ENCODE measurements at regions of chr19 and their contacts with region 1.

Region 1: DNA sequence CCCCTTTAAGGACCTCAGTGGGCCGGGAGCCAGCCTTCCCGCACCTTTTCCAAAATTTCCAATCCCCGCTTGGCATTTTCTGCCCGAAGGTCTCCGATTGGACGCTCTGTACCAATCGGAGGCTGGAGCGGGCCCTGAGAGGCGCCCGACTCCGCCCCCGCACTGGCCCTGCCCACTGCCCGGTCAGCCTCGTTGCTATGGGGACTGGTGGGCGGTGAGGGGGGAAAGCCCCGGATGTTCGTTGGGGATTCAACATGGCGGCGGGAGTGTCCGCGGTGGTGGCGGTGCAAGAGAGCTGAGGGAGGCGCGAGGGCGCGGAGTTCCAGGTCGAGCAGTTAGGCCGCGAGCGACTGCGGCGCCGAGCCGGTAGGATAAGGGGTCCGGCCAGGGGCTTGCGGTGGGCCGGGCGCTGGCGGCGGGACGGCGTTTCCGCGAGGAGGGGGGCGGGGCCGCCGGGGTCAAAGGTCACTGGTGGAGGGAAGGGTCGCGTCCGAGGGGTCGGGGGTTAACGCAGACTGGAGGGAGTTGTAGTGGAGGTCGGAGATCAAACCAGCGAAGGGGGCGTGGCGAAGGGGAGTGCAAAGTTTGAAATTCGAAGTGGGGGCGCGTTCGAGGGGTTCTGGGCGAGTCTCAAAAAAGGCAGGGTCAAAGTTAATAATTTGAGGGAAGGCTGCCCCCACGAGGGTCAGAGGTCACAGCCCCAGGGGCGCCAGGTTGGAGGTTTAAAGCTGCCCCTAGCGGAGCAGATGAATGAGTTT is at the start of gene PAK4:
- DNase-seq: peak; percentile 99
- ATAC-seq: peak; percentile 97
- H3K4me3 ChIP-seq: peak within 1 kb of the TSS; percentile 64
- H3K27ac ChIP-seq: peak within 1 kb of the TSS; percentile 63
- H3K4me1 ChIP-seq: peaks cover 22% of the 10 kb centered on the region
- H3K27me3 ChIP-seq: no peaks in the 10 kb centered on the region
- CTCF ChIP-seq: no peak
- total RNA-seq, gene PAK4: 72.8 TPM

Region 2: DNA sequence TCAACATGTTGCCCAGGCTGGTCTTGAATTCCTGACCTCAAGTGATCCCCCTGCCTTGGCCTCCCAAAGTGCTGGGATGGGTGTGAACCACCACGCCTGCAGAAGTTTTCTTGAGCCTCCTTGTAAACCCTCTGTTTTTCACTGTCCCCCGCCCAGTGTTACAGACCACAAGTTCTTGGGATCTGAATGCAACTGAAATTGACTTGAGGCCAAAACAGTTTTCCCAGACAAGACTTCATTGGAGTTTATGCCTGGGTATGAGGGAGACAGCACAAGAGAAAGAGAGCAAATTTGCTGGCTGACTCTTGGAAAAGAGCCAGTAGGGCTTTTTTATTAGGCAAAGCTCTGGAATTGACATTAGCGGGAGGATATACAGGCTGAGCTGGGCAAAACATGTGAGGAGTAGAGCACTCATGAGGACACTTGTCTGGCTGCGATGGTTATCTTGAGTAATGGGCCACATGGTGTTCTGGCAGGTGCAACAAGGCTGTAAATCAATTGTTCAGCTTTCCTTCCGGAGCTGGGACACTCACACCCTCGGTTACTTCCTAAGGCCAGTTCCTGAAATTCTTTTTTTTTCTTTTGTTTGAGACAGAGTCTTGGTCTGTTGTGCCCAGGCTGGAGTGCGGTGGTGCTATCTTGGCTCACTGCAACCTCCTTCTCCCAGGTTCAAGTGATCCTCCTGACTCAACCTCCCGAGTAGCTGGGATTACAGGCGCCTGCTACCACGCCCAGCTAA is 263.2 kb before region 1 on chr19:
- intact Hi-C with region 1: no loop called
- DNase-seq: no peak
- ATAC-seq: peak; percentile 66
- H3K4me3 ChIP-seq: no peak overlapping the region
- H3K27ac ChIP-seq: peak overlapping the region; percentile 47
- H3K4me1 ChIP-seq: peaks cover 30% of the 10 kb centered on the region
- H3K27me3 ChIP-seq: no peaks in the 10 kb centered on the region
- CTCF ChIP-seq: no peak

Region 3: GRCh38 chr19:38993271-38993670 is 132.5 kb before region 1 on chr19:
- intact Hi-C with region 1: no loop called
- DNase-seq: no peak
- ATAC-seq: no peak
- H3K4me3 ChIP-seq: no peak overlapping the region
- H3K27ac ChIP-seq: no peak overlapping the region
- H3K4me1 ChIP-seq: no peaks in the 10 kb centered on the region
- H3K27me3 ChIP-seq: no peaks in the 10 kb centered on the region
- CTCF ChIP-seq: no peak

Region 4: DNA sequence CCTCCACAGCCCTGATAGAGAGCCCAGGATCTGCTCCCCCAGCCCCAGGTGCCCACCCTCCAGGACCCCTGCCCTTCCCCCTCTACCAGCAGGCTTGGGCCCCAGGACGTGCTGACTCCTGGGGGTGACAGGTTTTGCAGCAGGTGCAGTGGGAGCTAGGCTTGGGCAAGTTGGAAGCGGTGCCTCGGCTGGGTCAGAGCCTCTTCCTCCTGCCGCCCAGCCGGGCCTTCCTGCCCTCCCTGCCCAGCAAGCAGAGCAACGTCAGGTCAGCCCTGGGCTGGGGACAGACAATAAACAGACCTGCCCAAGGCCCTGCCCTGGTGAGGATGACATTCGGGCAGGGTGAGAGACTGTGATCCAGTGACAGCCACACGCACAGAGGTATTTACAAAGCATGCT is 61.8 kb after region 1 on chr19:
- intact Hi-C with region 1: loop called (anchors 5 kb)
- DNase-seq: no peak
- ATAC-seq: peak; percentile 20
- H3K4me3 ChIP-seq: no peak overlapping the region
- H3K27ac ChIP-seq: no peak overlapping the region
- H3K4me1 ChIP-seq: peaks cover 3% of the 10 kb centered on the region
- H3K27me3 ChIP-seq: peaks cover 8% of the 10 kb centered on the region
- CTCF ChIP-seq: no peak

Region 5: DNA sequence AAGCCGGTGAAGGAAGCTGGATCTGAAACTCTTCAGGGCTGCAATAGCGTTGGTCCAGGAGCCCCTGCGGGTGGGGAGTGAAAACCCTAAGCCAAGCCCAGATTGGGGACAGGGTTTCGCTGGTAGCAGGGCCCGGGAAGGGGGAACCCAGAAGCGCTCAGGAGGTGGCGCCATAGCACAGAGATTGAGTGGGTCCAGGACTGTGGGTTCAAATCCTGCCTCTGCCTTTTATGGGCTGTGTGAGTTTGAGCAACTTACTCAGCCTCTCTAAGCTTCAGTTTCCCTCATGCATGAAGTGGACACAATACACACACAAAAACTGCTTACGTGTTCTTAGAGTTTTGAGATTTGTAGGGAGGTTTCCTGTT is 86.6 kb after region 1 on chr19:
- intact Hi-C with region 1: no loop called
- DNase-seq: peak; percentile 72
- ATAC-seq: peak; percentile 89
- H3K4me3 ChIP-seq: no peak overlapping the region
- H3K27ac ChIP-seq: no peak overlapping the region
- H3K4me1 ChIP-seq: no peaks in the 10 kb centered on the region
- H3K27me3 ChIP-seq: no peaks in the 10 kb centered on the region
- CTCF ChIP-seq: peak; percentile 35

Region 6: GRCh38 chr19:39328046-39328705 is 202.4 kb after region 1 on chr19:
- intact Hi-C with region 1: loop called (anchors 10 kb)
- DNase-seq: peak; percentile 91
- ATAC-seq: peak; percentile 95
- H3K4me3 ChIP-seq: no peak overlapping the region
- H3K27ac ChIP-seq: no peak overlapping the region
- H3K4me1 ChIP-seq: peaks cover 4% of the 10 kb centered on the region
- H3K27me3 ChIP-seq: no peaks in the 10 kb centered on the region
- CTCF ChIP-seq: peak; percentile 94